ENCODE measurements at regions of chr21 and their contacts with region 1.

Region 1: GRCh38 chr21:39313571-39314142 is at the start of gene BRWD1:
- DNase-seq: peak; percentile 91
- H3K4me3 ChIP-seq: peak within 1 kb of the TSS; percentile 70
- H3K27ac ChIP-seq: peak within 1 kb of the TSS; percentile 99
- H3K4me1 ChIP-seq: peaks cover 15% of the 10 kb centered on the region
- H3K27me3 ChIP-seq: no peaks in the 10 kb centered on the region
- CTCF ChIP-seq: peak; percentile 26; the same call in 1 of the 2 replicates
- total RNA-seq, gene BRWD1: 27.6 and 36.2 TPM in 2 replicates

Region 2: GRCh38 chr21:39349211-39350093 is 35.8 kb after region 1 on chr21:
- CTCF ChIA-PET with region 1: no interaction called
- POLR2A ChIA-PET with region 1: interaction called, 4 read pairs
- intact Hi-C with region 1: loop called (anchors 1 kb)
- DNase-seq: peak; percentile 98
- H3K4me3 ChIP-seq: peak overlapping the region; percentile 49
- H3K27ac ChIP-seq: peak overlapping the region; percentile 82
- H3K4me1 ChIP-seq: peaks cover 20% of the 10 kb centered on the region
- H3K27me3 ChIP-seq: no peaks in the 10 kb centered on the region
- CTCF ChIP-seq: no peak